ENCODE measurements at regions of chr4 and their contacts with region 1.

Region 1: GRCh38 chr4:13548984-13549546 is 4.8 kb upstream of the NKX3-2 start:
- DNase-seq: peak; percentile 75 to 93
- ATAC-seq: peak; percentile 58

Region 2: DNA sequence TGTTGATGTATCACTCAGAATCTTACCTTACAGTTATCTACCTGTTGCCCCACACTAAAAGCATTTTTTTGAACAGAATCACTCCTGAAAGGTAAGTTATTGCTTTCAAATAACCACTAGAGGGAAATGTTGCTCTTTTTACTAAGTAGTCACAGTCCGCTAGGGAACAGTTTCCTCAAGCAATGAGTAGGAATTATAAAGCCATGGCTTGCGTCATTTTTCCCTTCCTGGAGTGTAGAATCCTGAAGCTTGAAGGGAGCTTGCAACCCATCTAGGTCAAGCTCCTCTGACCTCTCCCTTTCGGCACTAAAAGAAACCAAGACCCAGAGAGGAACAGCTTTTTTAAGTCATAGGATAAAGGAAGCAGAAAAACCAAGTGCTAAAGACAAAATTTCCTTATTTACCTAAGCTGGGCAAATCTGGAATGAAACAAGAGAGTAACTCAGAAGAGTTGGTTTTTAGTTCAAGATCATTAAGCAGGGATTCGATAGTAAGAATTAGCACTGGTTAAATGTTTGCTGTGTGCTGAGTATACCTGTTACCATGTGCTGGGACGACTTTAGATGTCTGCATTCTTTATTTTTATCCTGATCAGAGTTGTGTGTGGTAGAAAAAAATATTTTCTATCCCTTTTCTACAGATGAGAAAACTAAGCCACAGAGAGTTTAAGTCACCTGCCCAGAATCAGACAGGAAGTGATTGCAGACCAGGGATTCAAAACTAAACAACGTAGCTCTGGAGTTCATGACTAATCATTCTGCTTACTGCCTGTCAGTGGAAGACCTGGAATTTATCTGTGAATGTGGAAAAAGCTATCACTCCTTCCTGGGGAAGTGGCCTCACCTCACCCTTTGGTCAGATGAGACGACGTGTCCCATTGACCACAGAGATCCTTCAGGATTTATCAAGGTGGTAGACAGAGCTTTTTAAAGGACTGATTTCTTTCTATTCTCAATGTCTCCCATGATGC is 696.4 kb before region 1 on chr4:
- intact Hi-C with region 1: loop called (anchors 2 to 10 kb)
- DNase-seq: no peak
- ATAC-seq: peak; percentile 78

Region 3: DNA sequence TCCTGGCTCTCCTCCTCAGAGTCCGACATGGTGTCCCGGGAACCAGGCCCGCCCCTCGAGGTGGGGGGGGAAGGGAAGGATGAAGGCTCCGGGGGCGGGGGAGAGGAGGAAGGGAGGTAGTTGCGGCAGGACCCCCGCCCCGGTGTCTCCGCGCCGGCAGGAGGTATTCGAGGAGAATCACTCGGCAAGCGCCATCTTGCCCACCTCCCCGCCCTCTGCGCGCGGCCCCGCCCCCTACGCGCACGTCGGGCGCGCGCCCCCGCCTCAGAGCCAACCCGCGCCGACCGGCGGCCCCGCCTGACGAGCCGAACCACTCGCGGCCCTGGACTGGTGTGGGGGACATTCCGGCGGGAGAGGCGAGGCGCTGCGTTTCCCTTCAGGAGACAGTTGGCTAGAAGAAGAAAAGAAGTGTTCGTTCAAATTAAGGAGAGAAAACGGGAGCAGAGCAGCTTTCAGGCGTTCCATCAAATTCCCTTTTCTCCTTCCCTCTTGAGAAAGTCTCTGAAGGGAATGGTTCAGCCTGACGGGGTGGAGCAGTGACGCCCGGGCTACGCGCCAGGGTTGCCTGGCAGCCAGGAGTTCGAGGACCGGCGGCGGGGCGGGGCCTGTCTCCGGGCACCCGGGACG is 64.8 kb before region 1 on chr4 and contains the start of gene RAB28:
- intact Hi-C with region 1: loop called in 1 of 2 experiments (anchors 10 kb)
- DNase-seq: peak; percentile 93 to 96
- ATAC-seq: peak; percentile 98
- total RNA-seq, gene RAB28: 13.2 to 15.8 TPM

Region 4: GRCh38 chr4:14583331-14583730 is 1034.3 kb after region 1 on chr4:
- intact Hi-C with region 1: no loop called
- DNase-seq: no peak
- ATAC-seq: no peak

Measured in left colon (tissue), 2 donors.